Mammary epithelial cell (primary cell): ENCODE measurements at regions of chr18 and their contacts with region 1.

Region 1: DNA sequence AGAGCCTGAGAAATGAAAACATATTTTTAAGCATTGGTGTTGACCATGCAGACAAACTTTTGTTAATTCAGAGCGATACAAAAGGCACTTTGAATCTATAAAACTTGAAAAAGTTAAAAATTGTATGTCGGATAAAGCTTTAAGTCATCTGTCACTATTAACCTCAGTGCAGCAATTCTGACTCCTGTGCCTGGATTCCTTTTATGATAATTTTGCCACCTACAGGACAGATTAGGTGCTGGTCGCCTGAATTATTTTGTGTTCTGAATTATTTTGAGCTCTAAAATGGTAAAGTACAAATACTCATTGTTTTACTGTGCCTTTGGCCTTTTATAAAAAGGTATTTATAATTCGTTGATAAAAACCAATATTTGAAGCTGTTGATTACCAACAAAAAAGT is 19.4 kb upstream of the RNF138 start:
- DNase-seq: no peak
- H3K4me3 ChIP-seq: no peak overlapping the region
- H3K27ac ChIP-seq: no peak overlapping the region
- H3K4me1 ChIP-seq: no peaks in the 10 kb centered on the region
- H3K27me3 ChIP-seq: no peaks in the 10 kb centered on the region
- CTCF ChIP-seq: peak; percentile 24 to 54

Region 2: GRCh38 chr18:32056613-32057358 is 15.5 kb before region 1 on chr18:
- CTCF ChIA-PET with region 1: interaction called, 27 read pairs
- dilution Hi-C with region 1: no loop called
- in situ Hi-C with region 1: no loop called
- intact Hi-C with region 1: no loop called
- DNase-seq: no peak
- H3K4me3 ChIP-seq: no peak overlapping the region
- H3K27ac ChIP-seq: no peak overlapping the region
- H3K4me1 ChIP-seq: no peaks in the 10 kb centered on the region
- H3K27me3 ChIP-seq: no peaks in the 10 kb centered on the region
- CTCF ChIP-seq: no peak